PC-9 (cell line): ENCODE measurements at regions of chr1 and their contacts with region 1.

Region 1: DNA sequence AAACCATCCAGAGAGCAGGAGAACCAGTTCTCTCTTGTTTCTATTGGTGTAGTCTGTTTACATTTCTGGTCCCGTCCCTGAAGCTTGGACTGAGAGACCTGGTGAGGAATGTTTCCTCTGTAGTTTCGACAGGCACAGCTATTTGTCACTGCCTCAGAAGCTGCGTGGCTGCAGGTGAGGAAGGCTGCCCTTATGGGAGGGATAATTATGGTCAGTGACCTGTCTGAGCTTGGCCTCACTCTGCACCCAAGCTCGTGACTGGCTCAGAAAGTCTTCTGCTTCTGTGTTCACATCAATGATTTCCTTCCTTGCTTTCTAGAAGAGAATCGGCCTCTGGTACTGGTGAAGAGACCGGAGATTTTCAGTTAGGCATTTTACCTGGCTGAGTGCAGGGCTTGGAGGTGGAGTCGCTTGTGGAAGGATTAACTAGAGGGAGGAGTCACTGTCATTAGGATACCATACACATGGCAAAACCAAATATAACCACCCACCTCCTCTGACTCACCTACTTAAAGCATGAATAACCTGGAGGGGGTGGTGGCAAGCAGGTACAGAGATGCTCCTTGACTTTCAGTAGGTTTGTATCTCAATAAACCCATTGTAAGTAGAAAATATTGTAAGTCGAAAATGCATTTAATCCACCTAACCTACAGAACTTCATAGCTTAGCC is 19.9 kb upstream of the WDR26 start:
- DNase-seq: peak; percentile 81 to 98
- H3K4me3 ChIP-seq: peak overlapping the region; percentile 39; the same call in 1 of the 2 replicates
- H3K27ac ChIP-seq: peak overlapping the region; percentile 88
- H3K4me1 ChIP-seq: peaks cover 45% of the 10 kb centered on the region
- H3K27me3 ChIP-seq: no peaks in the 10 kb centered on the region
- CTCF ChIP-seq: no peak

Region 2: DNA sequence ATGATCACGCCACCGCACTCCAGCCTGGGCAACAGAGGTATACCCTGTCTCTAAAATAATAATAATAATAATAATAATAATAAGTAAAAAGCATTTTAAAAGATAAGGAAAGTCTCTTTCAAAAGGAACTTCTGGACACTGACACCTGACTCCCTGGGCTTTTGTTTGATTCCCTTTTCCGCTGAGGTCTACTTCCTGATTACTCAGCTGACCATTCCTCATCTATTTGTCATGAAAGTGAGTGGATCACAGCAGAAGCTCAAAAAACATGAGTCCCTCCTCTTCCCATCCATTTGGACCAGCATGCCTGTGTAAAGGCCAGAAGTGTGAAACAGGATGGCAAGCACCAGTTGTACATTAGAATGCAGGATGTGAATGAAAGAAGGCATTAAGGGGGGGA is 401.8 kb before region 1 on chr1:
- CTCF ChIA-PET with region 1: interaction called, 14 read pairs
- POLR2A ChIA-PET with region 1: no interaction called
- intact Hi-C with region 1: no loop called
- DNase-seq: peak in 1 of 2 experiments; percentile 76
- H3K4me3 ChIP-seq: no peak overlapping the region
- H3K27ac ChIP-seq: peak overlapping the region; percentile 42
- H3K4me1 ChIP-seq: peaks cover 33% of the 10 kb centered on the region
- H3K27me3 ChIP-seq: no peaks in the 10 kb centered on the region
- CTCF ChIP-seq: no peak

Region 3: GRCh38 chr1:224252486-224252885 is 202.0 kb before region 1 on chr1:
- CTCF ChIA-PET with region 1: no interaction called
- POLR2A ChIA-PET with region 1: interaction called, 10 read pairs
- intact Hi-C with region 1: no loop called
- DNase-seq: no peak
- H3K4me3 ChIP-seq: no peak overlapping the region
- H3K27ac ChIP-seq: no peak overlapping the region
- H3K4me1 ChIP-seq: no peaks in the 10 kb centered on the region
- H3K27me3 ChIP-seq: no peaks in the 10 kb centered on the region
- CTCF ChIP-seq: no peak

Region 4: GRCh38 chr1:224300314-224300713 is 154.2 kb before region 1 on chr1:
- CTCF ChIA-PET with region 1: no interaction called
- POLR2A ChIA-PET with region 1: interaction called, 13 read pairs
- intact Hi-C with region 1: no loop called
- DNase-seq: peak; percentile 25 to 80
- H3K4me3 ChIP-seq: no peak overlapping the region
- H3K27ac ChIP-seq: no peak overlapping the region
- H3K4me1 ChIP-seq: peaks cover 24% of the 10 kb centered on the region
- H3K27me3 ChIP-seq: no peaks in the 10 kb centered on the region
- CTCF ChIP-seq: no peak

Region 5: DNA sequence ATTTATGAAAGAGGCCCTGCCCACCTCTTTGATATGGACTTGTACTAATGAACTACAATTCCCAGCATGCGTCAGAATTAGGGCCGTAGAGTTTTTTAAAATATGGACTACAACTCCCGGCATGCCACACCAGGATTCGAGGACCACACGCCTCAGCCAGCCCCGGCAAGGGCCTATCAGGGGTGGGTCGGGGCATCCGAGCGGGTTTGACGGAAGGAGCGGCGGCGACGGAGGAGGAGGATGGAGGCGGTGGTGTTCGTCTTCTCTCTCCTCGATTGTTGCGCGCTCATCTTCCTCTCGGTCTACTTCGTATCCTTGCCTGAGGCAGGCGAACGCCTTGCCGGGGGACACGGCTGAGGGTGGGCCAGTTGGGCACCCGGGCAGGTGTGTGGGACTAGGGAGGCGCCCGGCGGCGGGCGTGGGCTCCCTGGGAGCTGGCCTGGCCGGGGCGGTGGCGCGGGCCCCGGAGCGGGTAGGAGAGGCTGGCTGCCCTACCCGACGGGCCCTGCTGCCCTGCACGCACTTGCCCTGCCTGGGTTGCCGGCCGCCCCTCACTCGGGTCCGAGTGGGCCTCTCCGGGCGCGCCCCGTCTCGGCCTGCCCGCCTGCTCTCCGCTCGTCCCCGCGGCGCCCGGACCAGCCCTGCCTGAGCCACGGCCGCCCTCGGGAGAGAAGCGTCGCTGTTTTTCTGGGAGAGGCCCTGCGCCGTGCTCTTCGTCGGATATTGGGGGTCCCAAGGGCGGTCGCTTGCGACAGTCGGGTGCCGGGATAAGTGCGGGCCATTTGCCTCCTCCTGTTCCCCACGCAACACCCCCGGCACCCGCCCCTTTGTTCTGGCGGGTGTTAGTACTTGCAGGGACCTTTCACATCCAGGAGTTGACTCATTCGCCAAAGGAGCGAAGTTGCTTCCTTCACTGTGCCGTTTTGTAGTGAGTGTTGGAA is 97.6 kb before region 1 on chr1 and contains the start of gene CNIH4:
- CTCF ChIA-PET with region 1: no interaction called
- POLR2A ChIA-PET with region 1: no interaction called
- intact Hi-C with region 1: no loop called
- DNase-seq: peak; percentile 92
- H3K4me3 ChIP-seq: peak within 1 kb of the TSS; percentile 64
- H3K27ac ChIP-seq: peak within 1 kb of the TSS; percentile 47
- H3K4me1 ChIP-seq: peaks cover 14% of the 10 kb centered on the region
- H3K27me3 ChIP-seq: no peaks in the 10 kb centered on the region
- CTCF ChIP-seq: no peak
- total RNA-seq, gene CNIH4: 86.2 and 93.8 TPM in 2 replicates

Region 6: GRCh38 chr1:224434691-224435317 is 19.7 kb before region 1 on chr1 and contains the start of gene WDR26:
- CTCF ChIA-PET with region 1: interaction called, 5 read pairs
- POLR2A ChIA-PET with region 1: interaction called, 8 read pairs
- intact Hi-C with region 1: loop called (anchors 1 kb)
- DNase-seq: peak; percentile 76 to 78
- H3K4me3 ChIP-seq: peak within 1 kb of the TSS; percentile 87
- H3K27ac ChIP-seq: peak within 1 kb of the TSS; percentile 71
- H3K4me1 ChIP-seq: peaks cover 50% of the 10 kb centered on the region
- H3K27me3 ChIP-seq: no peaks in the 10 kb centered on the region
- CTCF ChIP-seq: 0 out of 2 replicates have a peak, but pooled peaks have one; percentile 17
- total RNA-seq, gene WDR26: 76.0 and 88.9 TPM in 2 replicates

Region 7: DNA sequence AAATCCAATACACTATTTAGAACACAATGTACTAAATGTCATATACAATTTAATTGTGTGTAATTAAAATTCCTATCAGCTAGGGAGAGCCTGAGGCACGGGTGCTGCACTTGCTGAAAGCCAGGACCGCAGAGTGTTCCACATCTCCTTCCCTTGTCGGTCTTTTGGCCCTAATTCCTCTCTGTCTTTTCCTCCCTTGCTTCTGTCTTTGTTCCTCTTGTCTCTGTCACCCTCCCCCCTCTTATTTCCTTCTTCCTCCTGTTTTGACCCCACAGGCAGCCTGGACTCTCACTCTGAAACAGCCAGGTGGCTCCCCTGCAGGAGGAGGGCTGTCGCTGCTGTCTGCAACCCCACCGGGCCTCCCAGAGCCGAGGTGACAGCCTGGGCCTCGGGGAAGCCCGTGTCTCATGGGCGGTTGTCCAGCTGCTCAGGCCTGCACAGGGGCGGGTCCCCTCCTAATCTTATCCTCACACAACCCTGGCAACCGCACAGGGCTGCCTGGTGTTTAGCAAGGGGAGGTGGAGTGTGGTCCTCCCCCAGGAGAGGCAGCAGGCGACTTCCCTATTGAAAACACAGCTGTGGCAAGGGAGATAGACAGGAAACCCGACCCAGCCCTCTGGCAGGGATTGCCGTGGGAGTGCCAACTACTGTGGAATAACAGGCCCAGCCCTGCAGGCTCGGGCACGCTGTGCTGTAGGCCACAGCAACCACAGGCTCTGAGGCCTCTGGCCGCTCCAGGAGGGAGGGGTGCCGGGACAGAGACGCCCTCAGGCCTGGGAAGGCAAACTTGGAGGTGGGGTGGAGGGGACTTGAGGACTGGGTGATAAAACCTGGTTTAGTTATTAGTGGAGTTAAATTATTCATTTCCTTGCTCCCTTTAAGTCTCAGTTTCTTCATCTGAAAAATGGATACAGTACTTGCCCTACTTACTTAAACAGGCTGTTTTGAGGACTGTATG is 48.9 kb after region 1 on chr1:
- CTCF ChIA-PET with region 1: interaction called, 9 read pairs
- POLR2A ChIA-PET with region 1: interaction called, 3 read pairs
- intact Hi-C with region 1: loop called (anchors 1 kb)
- DNase-seq: peak; percentile 88 to 94
- H3K4me3 ChIP-seq: no peak overlapping the region; the same call in 1 of the 2 replicates
- H3K27ac ChIP-seq: peak overlapping the region; percentile 38
- H3K4me1 ChIP-seq: peaks cover 44% of the 10 kb centered on the region
- H3K27me3 ChIP-seq: no peaks in the 10 kb centered on the region
- CTCF ChIP-seq: no peak; the same call in 1 of the 2 replicates